ENCODE measurements at regions of chr18 and their contacts with region 1.

Region 1: GRCh38 chr18:2655178-2655953 is at the start of gene SMCHD1:
- DNase-seq: peak; percentile 83 to 95 (median 89)
- ATAC-seq: peak; percentile 69 to 71
- H3K4me3 Mint-ChIP-seq: peak within 1 kb of the TSS; percentile 92 to 99 (median 96)
- H3K27ac Mint-ChIP-seq: peak within 1 kb of the TSS; percentile 90 to 99 (median 98)
- H3K4me1 Mint-ChIP-seq: peaks cover 8 to 62% (median 42%) of the 10 kb centered on the region in 4 donors
- H3K27me3 Mint-ChIP-seq: no peaks in the 10 kb centered on the region
- polyA plus RNA-seq, gene SMCHD1: 27.7 to 33.7 (median 29.4) TPM

Region 2: GRCh38 chr18:2547477-2548087 is 107.8 kb before region 1 on chr18:
- POLR2A ChIA-PET with region 1: interaction called, 15 read pairs
- DNase-seq: peak in 3 of 10 donors; percentile 39 to 50 (median 43)
- ATAC-seq: peak; percentile 50 to 63
- H3K4me3 Mint-ChIP-seq: no peak overlapping the region
- H3K27ac Mint-ChIP-seq: no peak overlapping the region
- H3K4me1 Mint-ChIP-seq: peaks cover 4 to 18% (median 14%) of the 10 kb centered on the region in 4 donors
- H3K27me3 Mint-ChIP-seq: no peaks in the 10 kb centered on the region

Region 3: DNA sequence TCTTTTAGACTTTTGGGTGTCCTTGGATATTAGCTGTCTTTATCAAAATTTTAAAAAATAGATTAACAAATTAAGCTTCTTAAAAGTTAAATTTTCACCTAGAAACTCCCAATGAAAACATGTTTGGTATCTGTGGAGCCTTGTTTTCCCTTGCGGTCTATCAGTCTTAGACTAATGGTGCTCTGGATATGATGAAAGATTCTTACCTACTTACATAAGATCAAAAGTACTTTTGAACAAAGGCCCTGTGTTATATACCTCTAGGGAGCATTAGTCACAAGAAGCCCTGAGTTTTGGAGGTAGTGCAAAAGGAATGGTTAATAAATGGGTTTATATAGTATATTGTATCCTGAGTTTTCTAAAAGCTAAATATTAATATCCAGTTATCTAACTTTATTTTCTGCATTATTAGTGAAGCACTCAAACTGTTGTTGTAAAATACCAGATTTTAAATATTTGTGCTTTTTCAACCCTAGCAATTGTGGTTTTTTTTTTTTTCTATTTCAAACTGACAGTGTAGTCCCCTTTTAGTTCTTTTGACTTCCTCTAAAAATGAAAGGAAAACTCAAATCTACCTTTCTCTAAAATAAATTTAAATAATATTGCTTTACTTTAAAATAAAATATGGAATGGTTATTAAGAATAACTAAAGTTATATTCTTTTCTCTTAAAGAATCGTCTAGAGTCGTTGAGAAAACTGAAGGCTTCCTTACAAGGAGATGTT is 65.9 kb before region 1 on chr18:
- POLR2A ChIA-PET with region 1: interaction called, 88 read pairs
- DNase-seq: peak in 4 of 10 donors; percentile 1 to 58 (median 40)
- ATAC-seq: peak; percentile 85 to 87
- H3K4me3 Mint-ChIP-seq: peak overlapping the region; percentile 63 to 89 (median 78)
- H3K27ac Mint-ChIP-seq: peak overlapping the region; percentile 73 to 99 (median 96)
- H3K4me1 Mint-ChIP-seq: peaks cover 16 to 55% (median 46%) of the 10 kb centered on the region in 4 donors
- H3K27me3 Mint-ChIP-seq: no peaks in the 10 kb centered on the region

Region 4: DNA sequence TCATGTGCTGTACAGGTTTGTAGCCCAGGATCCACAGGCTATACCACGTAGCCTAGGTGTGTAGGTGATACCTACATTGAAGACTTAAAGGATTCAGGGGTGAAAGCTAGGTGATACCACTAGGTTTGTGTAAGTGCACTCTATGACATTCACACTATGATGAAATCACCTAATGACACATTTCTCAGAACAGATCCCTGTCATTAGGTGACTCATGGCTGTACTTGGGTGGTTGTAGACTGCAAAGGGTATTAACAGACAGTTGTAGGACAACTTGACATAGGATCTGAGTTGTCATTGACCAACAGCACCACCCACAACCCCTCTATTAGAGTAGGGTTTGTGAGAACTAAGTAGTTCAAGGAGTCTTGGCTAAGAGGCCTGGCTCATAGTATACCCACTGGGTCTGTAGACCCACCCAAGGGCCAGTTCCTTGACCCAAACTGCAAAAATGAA is 27.5 kb before region 1 on chr18:
- POLR2A ChIA-PET with region 1: interaction called, 23 read pairs
- DNase-seq: no peak
- ATAC-seq: no peak
- H3K4me3 Mint-ChIP-seq: no peak overlapping the region
- H3K27ac Mint-ChIP-seq: peak overlapping the region in 2 of 10 donors; percentile 20 to 50
- H3K4me1 Mint-ChIP-seq: peaks cover 9 to 23% (median 19%) of the 10 kb centered on the region in 4 donors
- H3K27me3 Mint-ChIP-seq: no peaks in the 10 kb centered on the region

Region 5: GRCh38 chr18:2672872-2673271 is 17.5 kb after region 1 on chr18:
- POLR2A ChIA-PET with region 1: interaction called, 24 read pairs
- DNase-seq: no peak
- ATAC-seq: no peak
- H3K4me3 Mint-ChIP-seq: no peak overlapping the region
- H3K27ac Mint-ChIP-seq: peak overlapping the region in 7 of 10 donors; percentile 16 to 68 (median 40)
- H3K4me1 Mint-ChIP-seq: peaks cover 31 to 74% (median 70%) of the 10 kb centered on the region in 4 donors
- H3K27me3 Mint-ChIP-seq: no peaks in the 10 kb centered on the region